ENCODE measurements at regions of chr1 and their contacts with region 1.

Region 1: GRCh38 chr1:205255941-205256780 is 28.4 kb downstream of the TMCC2 start:
- DNase-seq: peak; percentile 85
- ATAC-seq: peak; percentile 97
- H3K4me3 ChIP-seq: no peak overlapping the region
- H3K4me3 Mint-ChIP-seq: no peak overlapping the region
- H3K27ac ChIP-seq: no peak overlapping the region
- H3K27ac Mint-ChIP-seq: no peak overlapping the region
- H3K4me1 ChIP-seq: peaks cover 0 to 4% of the 10 kb centered on the region in 2 donors
- H3K4me1 Mint-ChIP-seq: no peaks in the 10 kb centered on the region
- H3K27me3 ChIP-seq: peaks cover 0 to 6% (median 0%) of the 10 kb centered on the region in 4 experiments
- H3K27me3 Mint-ChIP-seq: no peaks in the 10 kb centered on the region
- CTCF ChIP-seq: peak; percentile 93

Region 2: GRCh38 chr1:204975570-204976235 is 280.5 kb before region 1 on chr1:
- CTCF ChIA-PET with region 1: interaction called, 110 read pairs
- POLR2A ChIA-PET with region 1: no interaction called
- intact Hi-C with region 1: no loop called
- DNase-seq: peak; percentile 75
- ATAC-seq: peak; percentile 90
- H3K4me3 ChIP-seq: no peak overlapping the region
- H3K4me3 Mint-ChIP-seq: no peak overlapping the region
- H3K27ac ChIP-seq: no peak overlapping the region
- H3K27ac Mint-ChIP-seq: no peak overlapping the region
- H3K4me1 ChIP-seq: peaks cover 18 to 25% of the 10 kb centered on the region in 2 donors
- H3K4me1 Mint-ChIP-seq: peaks cover 14% of the 10 kb centered on the region
- H3K27me3 ChIP-seq: peaks cover 0 to 16% (median 7%) of the 10 kb centered on the region in 4 experiments
- H3K27me3 Mint-ChIP-seq: peaks cover 18% of the 10 kb centered on the region
- CTCF ChIP-seq: peak; percentile 91

Region 3: DNA sequence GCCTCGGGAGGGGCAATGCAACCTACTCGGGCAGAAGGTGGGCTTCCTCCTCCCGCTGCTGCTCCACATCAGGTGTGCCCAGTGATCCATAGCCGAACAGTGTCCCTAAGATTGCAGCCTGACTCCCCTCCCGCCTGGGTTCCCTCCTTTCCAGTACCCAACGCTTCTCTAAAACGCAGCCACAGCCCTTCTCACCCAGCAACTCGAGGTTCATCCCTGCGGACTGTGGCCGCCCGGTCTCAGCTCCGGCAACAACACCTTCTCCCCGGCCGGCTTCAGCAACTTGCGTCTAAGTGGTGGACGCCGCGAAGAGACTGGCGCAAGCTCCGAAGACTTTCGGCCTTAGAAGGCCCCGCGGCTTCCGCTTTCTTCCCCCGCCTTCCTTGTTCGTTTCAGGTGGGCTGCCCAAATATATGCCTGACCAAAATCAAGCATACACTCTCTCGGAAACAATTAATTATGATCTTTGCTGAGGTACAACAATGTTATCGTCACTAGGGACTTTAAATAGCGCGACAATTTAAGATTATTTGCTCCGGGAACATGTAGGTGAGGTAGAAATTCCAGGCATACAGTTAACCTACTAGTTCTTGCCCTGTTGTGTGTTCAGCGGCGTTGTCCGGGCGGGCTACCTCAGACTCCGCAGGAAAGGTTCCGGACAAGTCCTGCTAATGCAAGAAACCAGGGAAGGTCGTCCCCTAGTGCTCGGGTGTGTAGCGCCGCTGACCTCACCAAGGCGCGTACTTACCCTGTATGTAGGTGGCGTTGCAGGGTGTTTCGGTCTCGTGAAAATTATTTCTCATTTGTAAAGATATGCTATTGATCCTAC is 134.3 kb before region 1 on chr1 and contains the start of gene RBBP5:
- CTCF ChIA-PET with region 1: interaction called, 6 read pairs
- POLR2A ChIA-PET with region 1: interaction called, 3 read pairs
- intact Hi-C with region 1: loop called (anchors 5 kb)
- DNase-seq: peak; percentile 99
- ATAC-seq: peak; percentile 93
- H3K4me3 ChIP-seq: peak within 1 kb of the TSS; percentile 74 to 99 (median 87)
- H3K4me3 Mint-ChIP-seq: peak within 1 kb of the TSS; percentile 98
- H3K27ac ChIP-seq: peak within 1 kb of the TSS; percentile 95 to 96
- H3K27ac Mint-ChIP-seq: peak within 1 kb of the TSS; percentile 100
- H3K4me1 ChIP-seq: peaks cover 31 to 40% of the 10 kb centered on the region in 2 donors
- H3K4me1 Mint-ChIP-seq: peaks cover 48% of the 10 kb centered on the region
- H3K27me3 ChIP-seq: no peaks in the 10 kb centered on the region
- H3K27me3 Mint-ChIP-seq: no peaks in the 10 kb centered on the region
- CTCF ChIP-seq: peak; percentile 73
- total RNA-seq, gene RBBP5: 18.5 and 31.7 TPM in 2 replicates

Region 4: DNA sequence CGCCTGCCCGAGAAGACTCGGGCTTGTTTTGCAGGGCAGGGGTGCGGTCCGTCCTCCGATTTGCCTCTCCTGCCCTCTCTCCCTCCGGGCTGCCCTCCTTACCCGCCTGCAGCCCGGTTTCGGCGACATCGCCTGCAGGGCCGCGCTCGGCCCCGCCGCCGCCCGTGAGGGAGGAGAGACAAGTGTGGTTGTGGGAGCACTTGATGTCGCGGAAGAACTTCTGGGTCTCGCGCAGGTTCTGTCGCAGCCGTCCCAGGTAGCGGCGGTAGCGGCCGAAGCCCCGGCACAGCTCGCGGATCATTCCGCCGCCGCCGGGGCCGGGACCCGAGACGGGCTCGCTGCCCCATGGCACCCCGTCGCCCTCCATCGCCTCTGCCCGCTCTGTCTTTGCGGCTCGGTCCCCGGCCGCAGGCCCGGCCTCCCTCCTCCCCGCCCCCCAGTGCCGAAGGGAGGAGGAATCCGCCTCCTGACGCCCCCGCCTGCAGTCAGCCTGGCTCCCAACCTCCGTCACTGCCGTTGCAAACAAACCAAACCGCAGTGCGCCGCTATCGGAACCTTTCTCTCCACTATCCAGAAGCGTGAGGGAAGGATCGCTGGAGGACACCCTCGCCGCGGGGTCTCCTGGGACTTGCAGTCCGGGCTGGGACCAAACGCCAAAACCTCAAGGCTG is 44.9 kb before region 1 on chr1 and contains the start of gene DSTYK:
- CTCF ChIA-PET with region 1: interaction called, 4 read pairs
- POLR2A ChIA-PET with region 1: no interaction called
- intact Hi-C with region 1: loop called (anchors 1 kb)
- DNase-seq: peak; percentile 96
- ATAC-seq: peak; percentile 85
- H3K4me3 ChIP-seq: peak within 1 kb of the TSS; percentile 70 to 96 (median 91)
- H3K4me3 Mint-ChIP-seq: peak within 1 kb of the TSS; percentile 96
- H3K27ac ChIP-seq: peak within 1 kb of the TSS; percentile 64 to 75
- H3K27ac Mint-ChIP-seq: peak within 1 kb of the TSS; percentile 96
- H3K4me1 ChIP-seq: peaks cover 22 to 25% of the 10 kb centered on the region in 2 donors
- H3K4me1 Mint-ChIP-seq: peaks cover 48% of the 10 kb centered on the region
- H3K27me3 ChIP-seq: no peaks in the 10 kb centered on the region
- H3K27me3 Mint-ChIP-seq: no peaks in the 10 kb centered on the region
- CTCF ChIP-seq: no peak
- total RNA-seq, gene DSTYK: 15.2 and 15.7 TPM in 2 replicates

Region 5: DNA sequence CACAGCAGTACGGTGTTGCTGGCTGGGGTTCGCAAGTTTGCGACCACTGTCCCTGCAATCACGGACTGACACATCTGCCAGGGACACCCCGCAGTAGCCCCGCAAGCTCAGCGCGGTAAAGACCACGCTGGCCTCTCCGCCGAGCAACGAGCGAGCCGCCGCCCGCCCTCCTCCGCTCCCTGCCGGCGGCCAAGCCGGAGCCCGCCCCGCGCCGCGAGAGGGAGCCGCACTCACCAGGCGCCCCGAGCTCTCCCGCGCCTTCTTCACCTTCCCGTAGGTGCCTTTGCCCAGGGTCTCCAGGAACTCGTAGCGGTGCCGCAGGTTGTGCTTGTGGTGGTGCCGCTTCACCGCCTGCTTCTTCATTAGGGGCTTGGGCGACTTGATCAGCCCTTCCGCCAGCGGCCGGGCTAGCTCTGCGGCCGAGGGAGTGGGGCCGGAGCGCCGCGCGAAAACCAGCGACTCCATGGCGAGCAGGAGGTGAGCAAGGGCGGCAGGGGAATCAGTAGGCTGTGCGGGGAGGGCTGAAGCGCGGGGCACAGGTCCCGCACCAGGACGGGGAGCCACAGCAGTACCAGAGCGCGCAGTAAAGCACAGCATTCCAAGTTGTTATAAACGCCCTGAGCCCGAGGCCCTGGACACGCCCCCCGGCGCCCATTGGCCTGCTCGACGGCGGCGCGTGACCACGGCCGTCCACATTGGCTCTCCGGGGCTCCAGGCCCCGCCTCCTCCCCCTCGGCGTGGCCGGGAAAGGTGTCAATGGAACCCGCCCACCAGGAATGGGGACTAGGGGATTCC is 65.2 kb after region 1 on chr1 and contains the start of gene NUAK2:
- CTCF ChIA-PET with region 1: interaction called, 20 read pairs
- POLR2A ChIA-PET with region 1: no interaction called
- intact Hi-C with region 1: no loop called
- DNase-seq: peak; percentile 89
- ATAC-seq: peak; percentile 90
- H3K4me3 ChIP-seq: peak within 1 kb of the TSS; percentile 65 to 100 (median 98)
- H3K4me3 Mint-ChIP-seq: peak within 1 kb of the TSS; percentile 97
- H3K27ac ChIP-seq: peak within 1 kb of the TSS; percentile 65 to 98
- H3K27ac Mint-ChIP-seq: peak within 1 kb of the TSS; percentile 95
- H3K4me1 ChIP-seq: peaks cover 52 to 54% of the 10 kb centered on the region in 2 donors
- H3K4me1 Mint-ChIP-seq: peaks cover 62% of the 10 kb centered on the region
- H3K27me3 ChIP-seq: no peaks in the 10 kb centered on the region
- H3K27me3 Mint-ChIP-seq: peaks cover 2% of the 10 kb centered on the region
- CTCF ChIP-seq: peak; percentile 35
- total RNA-seq, gene NUAK2: 102 and 105 TPM in 2 replicates

Region 6: DNA sequence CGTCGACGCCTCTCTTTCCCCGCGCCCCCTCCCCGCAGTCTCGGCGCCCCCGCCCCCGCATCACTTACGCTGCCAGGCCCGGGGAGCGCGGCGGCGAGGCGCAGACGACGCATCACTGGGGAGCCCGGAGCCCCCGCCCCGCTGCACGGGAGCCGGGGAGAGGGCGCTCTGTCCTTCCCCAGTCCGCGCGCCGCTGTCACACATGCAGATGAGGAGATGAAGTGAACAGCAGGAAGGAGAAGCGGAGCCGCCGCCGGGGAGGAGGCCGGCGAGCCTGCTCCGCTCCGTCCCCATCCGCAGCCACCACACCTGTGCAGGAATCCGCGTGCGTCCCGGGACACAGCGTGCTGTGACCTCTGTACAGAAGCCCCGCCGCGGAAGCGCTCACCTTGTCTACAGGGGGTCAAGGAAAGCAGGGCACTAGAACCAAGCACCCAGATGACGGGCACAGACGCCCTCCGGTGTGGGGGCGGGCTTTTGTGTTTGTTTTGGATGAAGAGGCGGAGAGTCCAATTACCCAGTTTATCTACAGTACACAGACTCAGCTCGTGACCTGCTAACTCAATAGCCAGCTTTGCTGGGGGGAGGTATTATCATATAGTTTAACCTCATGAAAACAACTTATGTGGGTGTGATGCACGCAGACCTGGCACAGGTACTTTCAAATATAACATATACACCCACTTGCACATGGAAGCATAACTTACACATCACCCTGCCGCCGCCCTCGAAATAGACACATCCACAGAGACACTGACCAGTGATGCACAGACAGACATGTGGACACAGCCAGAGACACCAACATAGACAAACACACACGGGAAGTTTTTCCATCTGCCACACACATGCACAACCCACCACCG is 88.1 kb after region 1 on chr1:
- CTCF ChIA-PET with region 1: interaction called, 11 read pairs
- POLR2A ChIA-PET with region 1: no interaction called
- intact Hi-C with region 1: no loop called
- DNase-seq: peak; percentile 69
- ATAC-seq: peak; percentile 61
- H3K4me3 ChIP-seq: peak overlapping the region in 4 of 5 experiments; percentile 37 to 51 (median 50)
- H3K4me3 Mint-ChIP-seq: peak overlapping the region; percentile 84
- H3K27ac ChIP-seq: no peak overlapping the region
- H3K27ac Mint-ChIP-seq: peak overlapping the region; percentile 32
- H3K4me1 ChIP-seq: peaks cover 34 to 42% of the 10 kb centered on the region in 2 donors
- H3K4me1 Mint-ChIP-seq: peaks cover 48% of the 10 kb centered on the region
- H3K27me3 ChIP-seq: peaks cover 0 to 20% (median 10%) of the 10 kb centered on the region in 4 experiments
- H3K27me3 Mint-ChIP-seq: peaks cover 8% of the 10 kb centered on the region
- CTCF ChIP-seq: no peak